Left lung (tissue), 14 donors: ENCODE measurements at regions of chr16 and their contacts with region 1.

Region 1: DNA sequence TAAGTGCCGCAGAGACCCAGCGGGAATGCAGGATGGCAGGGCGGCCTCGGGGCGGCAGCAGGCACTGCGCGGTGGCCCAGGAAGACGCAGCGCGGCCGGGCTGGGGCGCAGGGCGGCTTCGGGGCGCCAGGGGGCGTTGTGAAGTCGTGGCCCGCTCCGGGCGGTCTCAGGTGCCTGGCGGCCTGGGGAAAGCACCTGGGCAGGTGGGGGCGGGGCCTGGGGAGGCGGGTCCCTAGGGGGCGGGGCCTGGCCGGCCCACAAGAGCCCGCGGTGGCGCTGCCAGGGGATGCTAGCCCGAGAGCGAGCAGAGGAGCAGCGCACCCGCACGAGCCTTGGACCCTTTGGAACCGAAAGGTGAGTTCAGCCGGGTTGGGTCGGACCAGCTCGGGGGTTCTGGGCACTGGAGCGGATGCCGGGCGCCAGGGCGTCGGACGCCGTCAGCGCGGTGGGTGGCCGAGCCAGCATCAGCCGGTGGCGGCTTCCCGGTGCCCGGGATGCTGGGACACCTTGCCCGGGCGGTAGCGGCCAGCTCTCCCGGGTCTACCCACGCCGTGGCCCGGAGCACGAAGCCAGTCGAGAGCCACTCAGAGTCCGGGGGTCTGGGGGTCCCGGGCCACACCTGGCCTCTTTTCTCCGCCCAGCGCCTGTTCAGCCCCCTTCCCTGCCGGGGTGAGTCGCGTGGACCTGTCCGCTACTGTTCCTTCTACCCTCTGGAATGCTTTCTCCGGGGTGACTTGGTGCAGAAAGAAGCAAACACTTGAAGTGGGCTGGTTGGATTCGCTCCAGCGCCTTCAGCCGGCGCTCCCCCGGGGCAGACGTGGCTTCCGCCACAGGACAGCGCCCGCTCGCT is at the start of gene SCNN1G:
- DNase-seq: peak; percentile 59 to 93 (median 80)
- ATAC-seq: peak; percentile 99
- H3K4me3 ChIP-seq: peak within 1 kb of the TSS; percentile 35 to 54
- H3K27ac ChIP-seq: no peak within 1 kb of the TSS
- H3K4me1 ChIP-seq: peaks cover 5 to 12% of the 10 kb centered on the region in 2 donors
- H3K27me3 ChIP-seq: peaks cover 20 to 77% of the 10 kb centered on the region in 2 donors
- CTCF ChIP-seq: peak; percentile 94 to 95
- polyA plus RNA-seq, gene SCNN1G: 3.8 to 6.1 (median 4.6) TPM

Region 2: DNA sequence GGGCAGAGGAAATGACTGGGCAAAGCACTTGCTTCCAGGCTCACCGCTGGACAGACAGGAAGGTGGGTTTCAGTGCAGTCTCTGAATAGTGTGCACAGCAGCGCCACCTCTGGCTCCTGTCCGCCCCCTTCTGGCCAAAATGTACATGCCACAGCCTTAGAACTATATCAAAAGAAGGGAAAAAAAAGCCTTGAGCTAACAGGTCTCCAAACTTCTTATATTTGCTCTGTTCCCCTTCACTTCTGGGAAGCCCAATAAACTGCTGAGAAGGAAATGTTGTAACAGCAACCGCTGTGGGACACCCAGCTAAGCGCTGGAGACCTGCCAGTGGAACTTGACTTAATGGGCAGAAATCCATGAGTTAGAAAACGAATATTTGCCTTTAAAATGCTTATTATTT is 252.8 kb after region 1 on chr16:
- intact Hi-C with region 1: loop called (anchors 10 kb)
- DNase-seq: peak in 3 of 4 donors; percentile 60 to 82 (median 61)
- ATAC-seq: peak; percentile 89
- H3K4me3 ChIP-seq: no peak overlapping the region
- H3K27ac ChIP-seq: peak overlapping the region in 1 of 2 donors; percentile 45
- H3K4me1 ChIP-seq: peaks cover 14 to 28% of the 10 kb centered on the region in 2 donors
- H3K27me3 ChIP-seq: no peaks in the 10 kb centered on the region
- CTCF ChIP-seq: peak; percentile 82 to 85